Activated CD4-positive, alpha-beta T cell treated with anti-CD3 and anti-CD28 coated beads, Interleukin-2, amount 10 ng/mL, durations not matched to agents 7 days and 5 days (primary cell): ENCODE measurements at regions of chr11 and their contacts with region 1.

Region 1: DNA sequence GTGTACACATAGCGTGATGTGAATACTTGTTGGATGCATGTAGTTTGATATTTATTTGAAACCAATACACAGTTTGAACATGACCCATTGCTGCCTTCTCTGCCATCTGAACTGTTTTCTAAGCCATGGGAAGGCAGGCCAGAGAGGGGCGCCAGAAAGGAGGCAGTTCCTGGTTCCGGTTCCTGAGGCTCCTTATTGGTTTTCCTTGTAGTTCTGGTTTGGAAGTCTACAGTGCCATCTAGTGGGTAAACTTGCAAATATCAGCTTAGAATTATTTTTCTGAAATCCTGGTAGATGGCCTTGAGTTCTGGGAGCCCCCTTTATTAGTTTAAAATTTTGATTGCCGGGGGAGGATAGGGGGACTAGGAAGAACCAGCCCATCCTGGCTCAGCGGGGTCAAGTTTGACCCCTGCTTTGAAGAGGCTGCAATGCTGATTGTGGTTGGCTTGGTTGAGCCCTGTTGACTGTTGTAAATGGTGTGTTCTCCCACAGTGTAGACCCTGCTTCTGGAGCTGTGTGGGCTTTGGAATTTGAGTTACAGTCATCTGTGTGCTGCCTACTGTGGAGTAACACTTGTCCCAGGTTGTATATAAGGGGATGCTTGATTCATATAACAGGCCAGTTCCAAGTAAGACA is 48.4 kb downstream of the GRAMD1B start:
- DNase-seq: peak; percentile 48
- H3K4me3 Mint-ChIP-seq: no peak overlapping the region
- H3K27ac Mint-ChIP-seq: peak overlapping the region; percentile 25
- H3K4me1 Mint-ChIP-seq: peaks cover 41% of the 10 kb centered on the region
- H3K27me3 Mint-ChIP-seq: no peaks in the 10 kb centered on the region

Region 2: DNA sequence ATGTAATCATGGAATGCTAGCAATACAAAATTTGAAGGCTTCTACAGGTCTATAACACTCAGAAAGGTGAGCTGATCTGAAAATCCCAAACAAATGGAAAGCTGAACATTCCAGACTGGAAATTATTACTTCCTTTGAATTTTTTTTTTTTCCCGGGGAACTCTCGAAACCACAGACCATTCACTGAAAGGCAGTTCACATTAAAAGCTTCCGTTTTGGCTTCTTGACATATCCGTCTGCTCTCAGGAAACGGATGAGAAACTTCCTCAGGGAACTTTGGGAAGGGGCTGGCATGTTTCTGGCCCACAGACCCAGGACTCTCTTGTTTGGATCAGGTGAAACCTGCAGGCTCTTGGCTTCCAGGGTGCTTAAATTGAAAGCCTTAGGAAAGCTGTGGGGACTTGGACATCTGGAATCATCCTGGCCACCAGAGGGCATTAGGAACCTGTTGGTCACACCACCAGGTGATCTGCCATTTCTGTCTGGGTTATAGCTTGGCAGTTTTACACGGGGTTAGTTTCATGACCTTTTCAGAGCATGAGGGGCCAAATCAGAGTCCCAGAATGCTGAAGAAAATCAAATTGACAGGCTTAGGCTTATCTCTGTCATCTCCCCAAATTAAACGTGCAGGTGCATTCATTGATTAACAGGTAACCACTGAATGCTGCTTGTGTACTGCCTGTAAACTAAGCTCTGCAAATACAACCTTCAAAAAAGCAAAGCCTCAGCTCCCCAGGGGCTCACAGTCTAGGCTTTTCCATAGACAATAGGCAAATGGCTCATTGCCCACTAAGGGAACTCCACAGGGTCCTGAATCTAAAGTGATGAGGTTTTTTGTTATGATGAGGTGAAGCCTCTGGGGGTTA is 71.1 kb before region 1 on chr11:
- CTCF ChIA-PET with region 1: interaction called, 41 read pairs
- POLR2A ChIA-PET with region 1: no interaction called
- DNase-seq: peak; percentile 74
- H3K4me3 Mint-ChIP-seq: peak overlapping the region; percentile 68
- H3K27ac Mint-ChIP-seq: no peak overlapping the region
- H3K4me1 Mint-ChIP-seq: peaks cover 48% of the 10 kb centered on the region
- H3K27me3 Mint-ChIP-seq: no peaks in the 10 kb centered on the region

Region 3: DNA sequence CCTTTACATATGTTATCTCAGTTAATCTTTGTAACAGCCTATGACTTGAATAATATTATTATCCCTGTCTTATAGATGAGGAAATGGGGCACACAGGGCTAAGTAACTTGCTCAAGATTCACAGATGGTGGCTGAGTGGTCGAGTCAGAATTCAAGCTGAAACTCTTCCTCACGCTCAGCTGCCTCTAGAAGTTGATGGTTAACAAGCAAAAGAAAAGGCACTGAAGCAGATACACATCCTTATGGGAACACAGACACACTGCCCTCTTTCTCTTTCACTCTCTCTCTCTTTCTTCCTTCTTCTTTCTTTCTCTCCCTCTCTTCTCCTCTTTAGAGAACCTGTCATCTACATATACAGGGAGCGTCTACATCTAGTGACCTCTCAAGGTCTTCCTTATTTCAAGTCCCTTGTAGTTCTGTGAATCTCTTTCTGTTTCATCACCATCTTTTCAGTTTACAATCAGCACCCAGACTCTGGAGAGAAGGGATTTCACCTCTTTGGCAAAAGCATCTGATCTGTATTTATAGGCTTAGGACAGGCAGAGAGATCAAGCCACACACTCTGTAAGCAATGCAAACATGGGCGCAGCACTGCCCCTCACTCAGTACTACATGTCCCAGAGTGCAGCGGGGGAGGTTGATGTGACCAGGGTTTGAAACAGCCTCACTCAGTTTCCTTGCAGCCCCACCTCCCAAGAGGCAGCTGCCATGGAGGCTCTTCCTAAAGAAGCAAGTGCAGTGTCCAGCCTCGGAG is 27.3 kb after region 1 on chr11:
- CTCF ChIA-PET with region 1: no interaction called
- POLR2A ChIA-PET with region 1: no interaction called
- DNase-seq: no peak
- H3K4me3 Mint-ChIP-seq: no peak overlapping the region
- H3K27ac Mint-ChIP-seq: peak overlapping the region; percentile 3
- H3K4me1 Mint-ChIP-seq: peaks cover 40% of the 10 kb centered on the region
- H3K27me3 Mint-ChIP-seq: no peaks in the 10 kb centered on the region